ENCODE measurements at regions of chr6 and their contacts with region 1.

Region 1: GRCh38 chr6:109073344-109074132 is 21.1 kb downstream of the SESN1 start:
- DNase-seq: peak; percentile 85
- H3K4me3 Mint-ChIP-seq: no peak overlapping the region
- H3K27ac Mint-ChIP-seq: no peak overlapping the region
- H3K4me1 Mint-ChIP-seq: peaks cover 12% of the 10 kb centered on the region
- H3K27me3 Mint-ChIP-seq: no peaks in the 10 kb centered on the region
- CTCF ChIP-seq: peak; percentile 64

Region 2: GRCh38 chr6:108782179-108783041 is 291.1 kb before region 1 on chr6:
- CTCF ChIA-PET with region 1: interaction called, 6 read pairs
- POLR2A ChIA-PET with region 1: interaction called, 3 read pairs
- intact Hi-C with region 1: loop called (anchors 1 kb)
- DNase-seq: peak; percentile 92
- H3K4me3 Mint-ChIP-seq: peak overlapping the region; percentile 62
- H3K27ac Mint-ChIP-seq: peak overlapping the region; percentile 83
- H3K4me1 Mint-ChIP-seq: peaks cover 18% of the 10 kb centered on the region
- H3K27me3 Mint-ChIP-seq: no peaks in the 10 kb centered on the region
- CTCF ChIP-seq: peak; percentile 70

Region 3: DNA sequence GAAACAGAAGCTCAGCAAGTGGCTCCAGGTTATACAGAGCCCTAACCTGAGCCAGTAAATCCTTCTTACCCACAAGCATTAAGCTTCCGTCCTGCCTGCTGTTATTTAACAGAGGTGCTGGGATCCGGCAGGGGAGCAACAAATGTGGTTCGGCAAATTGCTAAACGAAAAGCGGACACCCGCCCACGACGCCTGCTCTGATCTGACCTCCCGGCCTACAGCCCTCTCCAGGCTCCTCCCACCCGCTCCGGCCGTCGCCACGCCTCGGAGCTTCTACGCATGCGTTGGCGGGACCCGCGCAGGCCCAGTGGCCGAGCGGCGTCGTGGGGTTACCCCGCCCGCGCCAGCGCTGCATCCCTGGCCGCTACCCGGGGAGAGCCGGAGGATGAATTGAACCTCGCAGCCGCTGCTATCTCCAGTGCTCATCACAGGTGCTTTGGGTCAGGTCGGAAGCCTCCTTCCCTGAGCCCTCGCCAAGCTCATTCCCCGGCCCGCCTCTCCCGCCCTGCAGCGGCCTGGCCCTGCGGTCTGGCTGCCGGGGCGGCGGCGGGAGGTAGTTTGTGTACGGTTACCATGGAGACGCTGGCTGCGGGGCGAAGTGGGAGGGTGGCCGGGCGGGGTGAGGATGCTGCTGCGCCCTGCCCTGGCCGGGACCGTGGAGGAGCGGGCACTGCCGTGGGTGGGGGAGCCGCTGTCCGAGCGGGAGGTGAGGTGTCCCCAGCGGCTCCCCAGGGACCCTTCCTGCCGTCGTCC is 225.2 kb before region 1 on chr6 and contains the start of gene ARMC2:
- CTCF ChIA-PET with region 1: interaction called, 12 read pairs
- POLR2A ChIA-PET with region 1: interaction called, 5 read pairs
- intact Hi-C with region 1: no loop called
- DNase-seq: peak; percentile 89
- H3K4me3 Mint-ChIP-seq: peak within 1 kb of the TSS; percentile 83
- H3K27ac Mint-ChIP-seq: peak within 1 kb of the TSS; percentile 87
- H3K4me1 Mint-ChIP-seq: peaks cover 5% of the 10 kb centered on the region
- H3K27me3 Mint-ChIP-seq: no peaks in the 10 kb centered on the region
- CTCF ChIP-seq: no peak
- total RNA-seq, gene ARMC2: 1.6 and 3.2 TPM in 2 replicates

Region 4: DNA sequence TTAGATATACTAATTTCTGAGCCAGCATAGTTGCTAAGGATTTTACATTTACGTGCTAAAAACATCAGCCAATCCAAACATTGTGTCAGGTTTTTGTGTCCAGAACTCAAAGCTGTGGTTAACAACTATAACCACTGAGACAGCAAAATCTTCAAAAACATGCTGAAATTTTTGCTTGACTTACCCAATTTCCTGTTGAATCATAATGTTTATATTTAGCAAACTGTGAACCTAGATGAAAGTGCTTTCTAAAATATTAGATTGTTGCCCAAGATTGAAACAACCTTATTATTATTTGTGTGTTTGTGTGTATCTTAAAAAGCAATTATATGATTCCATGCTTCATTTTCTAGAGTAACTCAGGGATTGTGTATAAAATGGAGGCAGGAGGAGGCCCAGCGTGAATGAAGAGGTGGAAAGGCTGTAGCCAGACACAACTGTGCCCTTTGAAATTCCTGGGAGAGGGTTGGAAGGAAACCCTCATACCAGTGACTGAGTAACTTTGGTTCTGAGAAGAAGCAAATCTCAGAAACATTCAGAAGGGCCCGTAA is 177.4 kb before region 1 on chr6:
- CTCF ChIA-PET with region 1: interaction called, 19 read pairs
- POLR2A ChIA-PET with region 1: interaction called, 4 read pairs
- intact Hi-C with region 1: loop called (anchors 1 kb)
- DNase-seq: peak; percentile 88
- H3K4me3 Mint-ChIP-seq: peak overlapping the region; percentile 40
- H3K27ac Mint-ChIP-seq: peak overlapping the region; percentile 97
- H3K4me1 Mint-ChIP-seq: peaks cover 29% of the 10 kb centered on the region
- H3K27me3 Mint-ChIP-seq: no peaks in the 10 kb centered on the region
- CTCF ChIP-seq: no peak

Region 5: GRCh38 chr6:109009236-109009961 is 64.1 kb before region 1 on chr6:
- CTCF ChIA-PET with region 1: interaction called, 4 read pairs
- POLR2A ChIA-PET with region 1: interaction called, 61 read pairs
- intact Hi-C with region 1: no loop called
- DNase-seq: peak; percentile 89
- H3K4me3 Mint-ChIP-seq: peak overlapping the region; percentile 93
- H3K27ac Mint-ChIP-seq: peak overlapping the region; percentile 94
- H3K4me1 Mint-ChIP-seq: peaks cover 24% of the 10 kb centered on the region
- H3K27me3 Mint-ChIP-seq: no peaks in the 10 kb centered on the region
- CTCF ChIP-seq: no peak

Region 6: DNA sequence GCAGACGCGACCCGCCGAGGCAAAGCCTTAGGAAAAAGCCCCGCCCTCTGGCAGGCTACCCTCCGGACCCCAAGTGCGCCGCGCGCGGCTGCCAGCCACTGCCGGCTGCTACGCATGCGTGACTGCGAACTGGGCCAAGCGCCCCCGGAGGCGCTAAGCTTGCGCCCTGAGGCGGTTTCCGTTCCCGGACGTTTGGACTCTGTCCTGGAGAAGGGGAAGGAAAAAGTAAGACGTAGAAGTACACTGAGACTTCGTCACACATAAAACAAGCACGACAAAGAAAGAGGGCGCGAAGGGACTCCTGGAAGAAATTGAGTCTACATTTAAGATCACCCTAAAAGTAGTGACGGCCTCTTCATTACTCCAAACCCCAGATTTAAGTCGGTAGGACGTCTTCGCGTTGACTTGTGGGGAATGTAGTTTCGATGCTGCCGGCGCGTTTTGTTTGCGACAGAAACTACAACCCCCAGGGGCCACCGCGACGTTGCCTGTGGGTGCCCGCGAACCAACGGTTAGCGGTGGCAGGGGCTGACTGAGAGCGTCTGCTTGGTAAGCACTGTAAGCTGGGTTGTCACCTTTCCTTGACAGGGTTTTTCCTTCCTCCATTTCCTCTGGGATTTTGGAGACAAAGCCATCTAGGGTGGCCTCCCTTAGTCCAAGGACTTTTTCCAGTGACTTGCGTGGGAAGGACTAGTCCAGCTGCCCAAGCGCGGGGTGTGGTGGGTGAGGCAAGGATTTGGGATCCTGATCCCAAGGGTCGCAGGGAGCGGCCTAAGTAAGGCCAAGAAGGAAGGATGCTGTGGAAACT is 21.7 kb after region 1 on chr6 and contains the start of gene CEP57L1:
- CTCF ChIA-PET with region 1: interaction called, 13 read pairs
- POLR2A ChIA-PET with region 1: interaction called, 18 read pairs
- intact Hi-C with region 1: no loop called
- DNase-seq: peak; percentile 96
- H3K4me3 Mint-ChIP-seq: peak within 1 kb of the TSS; percentile 92
- H3K27ac Mint-ChIP-seq: peak within 1 kb of the TSS; percentile 98
- H3K4me1 Mint-ChIP-seq: peaks cover 36% of the 10 kb centered on the region
- H3K27me3 Mint-ChIP-seq: no peaks in the 10 kb centered on the region
- CTCF ChIP-seq: no peak
- total RNA-seq, gene CEP57L1: 16.7 and 18.9 TPM in 2 replicates

Region 7: DNA sequence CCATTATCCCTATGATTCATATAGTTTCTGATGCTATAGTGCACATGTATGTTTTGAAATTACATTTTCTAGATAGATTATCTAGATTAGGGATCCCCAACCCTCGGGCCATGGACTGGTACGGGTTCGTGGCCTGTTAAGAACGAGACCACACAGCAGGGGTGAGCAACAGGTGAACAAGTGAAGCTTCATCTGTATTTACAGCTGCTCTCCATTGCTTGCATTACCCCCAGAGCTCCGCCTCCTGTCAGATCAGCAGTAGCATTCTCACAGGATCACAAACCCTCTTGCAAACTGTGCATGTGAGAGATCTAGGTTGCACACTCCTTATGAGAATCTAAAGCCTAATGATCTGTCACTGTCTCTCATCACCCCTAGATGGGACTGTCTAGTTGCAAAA is 32.1 kb after region 1 on chr6:
- CTCF ChIA-PET with region 1: no interaction called
- POLR2A ChIA-PET with region 1: no interaction called
- intact Hi-C with region 1: no loop called
- DNase-seq: no peak
- H3K4me3 Mint-ChIP-seq: no peak overlapping the region
- H3K27ac Mint-ChIP-seq: no peak overlapping the region
- H3K4me1 Mint-ChIP-seq: no peaks in the 10 kb centered on the region
- H3K27me3 Mint-ChIP-seq: no peaks in the 10 kb centered on the region
- CTCF ChIP-seq: no peak